Naive thymus-derived CD4-positive, alpha-beta T cell (primary cell): ENCODE measurements at regions of chr5 and their contacts with region 1.

Region 1: DNA sequence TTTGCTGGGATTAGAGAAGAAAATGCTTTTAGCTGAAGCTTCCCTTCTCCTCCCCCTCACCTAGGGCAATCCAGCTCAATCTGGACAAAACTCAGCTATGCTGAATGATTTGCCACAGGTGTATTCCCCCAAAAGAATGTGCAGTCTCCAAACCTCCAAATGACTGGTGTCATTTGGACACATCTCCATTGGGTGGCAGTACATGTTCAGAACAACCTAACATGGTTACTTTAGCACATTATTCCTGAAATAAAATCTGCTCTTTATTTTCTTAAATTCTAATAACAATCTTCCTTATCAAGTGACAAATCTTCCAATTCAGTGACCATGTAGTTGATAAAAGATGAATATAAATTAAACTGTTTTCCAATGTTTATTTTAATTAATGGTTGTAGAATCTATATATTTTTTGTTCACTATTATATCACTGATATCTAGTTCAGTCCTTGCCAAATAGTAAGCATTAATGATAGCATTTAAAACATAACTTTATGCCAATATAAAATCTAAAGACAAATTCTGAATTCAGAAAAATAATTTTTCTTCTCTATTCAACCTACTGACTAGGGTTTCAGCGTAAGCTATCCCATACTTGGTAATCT is 61.3 kb upstream of the MOCS2 start:
- DNase-seq: peak in 2 of 9 donors; percentile 3 to 22
- ATAC-seq: no peak
- H3K4me3 ChIP-seq: no peak overlapping the region
- H3K4me3 Mint-ChIP-seq: no peak overlapping the region
- H3K27ac ChIP-seq: no peak overlapping the region
- H3K27ac Mint-ChIP-seq: no peak overlapping the region
- H3K4me1 ChIP-seq: no peaks in the 10 kb centered on the region
- H3K4me1 Mint-ChIP-seq: no peaks in the 10 kb centered on the region
- H3K27me3 ChIP-seq: no peaks in the 10 kb centered on the region
- H3K27me3 Mint-ChIP-seq: peaks cover 0 to 33% (median 24%) of the 10 kb centered on the region in 5 donors

Region 2: DNA sequence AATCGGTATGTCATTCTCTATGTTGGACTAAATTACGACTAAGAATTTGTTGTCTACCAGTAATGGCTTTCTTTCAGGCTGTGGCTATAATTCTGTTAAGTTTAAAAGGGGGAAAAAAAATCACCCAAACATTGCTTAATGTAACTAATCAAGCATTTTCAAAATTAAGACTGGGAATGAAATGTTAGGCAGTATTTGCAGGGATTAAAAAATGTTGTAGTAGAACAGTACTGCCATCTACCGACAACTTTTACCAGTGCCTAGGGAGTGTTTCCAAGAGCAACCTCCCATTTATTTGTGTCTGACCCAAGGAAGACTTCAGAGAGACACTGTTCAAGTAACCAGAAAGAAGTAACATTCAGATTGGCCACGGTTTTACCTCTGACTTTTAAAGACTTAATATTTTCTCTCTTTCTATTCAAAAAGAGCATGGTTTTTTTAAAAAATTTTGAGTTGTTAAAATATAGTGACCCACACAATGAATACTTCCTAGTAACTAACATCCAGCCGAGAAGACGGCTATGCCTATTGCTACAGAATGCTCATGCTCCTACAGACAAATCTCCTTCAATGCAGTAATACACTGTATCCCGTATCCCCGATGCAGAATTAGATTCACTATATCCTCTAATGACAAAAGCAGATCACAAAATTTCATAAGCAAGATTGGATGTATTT is 1047.1 kb after region 1 on chr5:
- CTCF ChIA-PET with region 1: no interaction called
- POLR2A ChIA-PET with region 1: no interaction called
- intact Hi-C with region 1: loop called (anchors 1 kb)
- DNase-seq: peak in 3 of 9 donors; percentile 8 to 37 (median 28)
- ATAC-seq: peak; percentile 51
- H3K4me3 ChIP-seq: no peak overlapping the region
- H3K4me3 Mint-ChIP-seq: no peak overlapping the region
- H3K27ac ChIP-seq: no peak overlapping the region
- H3K27ac Mint-ChIP-seq: no peak overlapping the region
- H3K4me1 ChIP-seq: no peaks in the 10 kb centered on the region
- H3K4me1 Mint-ChIP-seq: peaks cover 0 to 23% (median 10%) of the 10 kb centered on the region in 7 donors
- H3K27me3 ChIP-seq: no peaks in the 10 kb centered on the region
- H3K27me3 Mint-ChIP-seq: peaks cover 0 to 2% (median 0%) of the 10 kb centered on the region in 5 donors

Region 3: GRCh38 chr5:54229041-54229780 is 1058.4 kb after region 1 on chr5:
- CTCF ChIA-PET with region 1: interaction called, 6 read pairs
- POLR2A ChIA-PET with region 1: no interaction called
- intact Hi-C with region 1: loop called (anchors 1 to 5 kb)
- DNase-seq: peak; percentile 32 to 70 (median 62)
- ATAC-seq: peak; percentile 89
- H3K4me3 ChIP-seq: no peak overlapping the region
- H3K4me3 Mint-ChIP-seq: peak overlapping the region in 1 of 10 donors; percentile 14
- H3K27ac ChIP-seq: no peak overlapping the region
- H3K27ac Mint-ChIP-seq: peak overlapping the region in 1 of 9 donors; percentile 10
- H3K4me1 ChIP-seq: peaks cover 0 to 4% of the 10 kb centered on the region in 2 donors
- H3K4me1 Mint-ChIP-seq: peaks cover 3 to 39% (median 18%) of the 10 kb centered on the region in 7 donors
- H3K27me3 ChIP-seq: no peaks in the 10 kb centered on the region
- H3K27me3 Mint-ChIP-seq: peaks cover 0 to 8% (median 0%) of the 10 kb centered on the region in 5 donors

Region 4: DNA sequence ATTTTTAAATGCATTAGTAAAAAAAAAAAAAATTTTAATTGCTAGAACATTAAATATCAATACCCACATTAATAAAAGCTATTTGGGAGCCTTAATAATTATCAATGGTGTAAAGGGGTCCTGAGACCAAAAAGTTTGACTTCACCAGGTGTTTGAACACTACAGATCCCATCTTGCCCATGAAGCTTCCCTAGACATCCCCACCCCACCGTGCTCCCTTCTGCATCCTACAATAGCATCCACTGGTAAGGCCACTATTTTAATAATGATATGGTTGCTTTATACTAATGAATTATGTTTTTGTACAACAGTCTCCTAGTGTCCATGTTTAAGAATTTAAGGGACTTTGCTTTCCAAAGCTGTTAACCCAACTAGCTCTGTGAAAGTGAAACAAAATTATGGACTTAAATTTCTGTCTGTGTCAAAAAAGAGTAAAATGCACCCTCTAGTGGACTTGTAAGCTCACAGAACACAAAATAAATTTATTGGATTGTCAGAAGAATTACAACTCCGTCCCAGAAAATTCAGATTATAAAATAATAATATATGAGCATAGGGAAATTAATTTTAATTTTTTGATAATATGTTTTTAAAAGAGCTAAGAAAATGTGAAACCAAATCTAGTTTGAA is 1063.6 kb after region 1 on chr5:
- CTCF ChIA-PET with region 1: interaction called, 6 read pairs
- POLR2A ChIA-PET with region 1: no interaction called
- intact Hi-C with region 1: loop called (anchors 1 to 5 kb)
- DNase-seq: peak in 1 of 9 donors; percentile 23
- ATAC-seq: no peak
- H3K4me3 ChIP-seq: no peak overlapping the region
- H3K4me3 Mint-ChIP-seq: peak overlapping the region in 1 of 10 donors; percentile 17
- H3K27ac ChIP-seq: no peak overlapping the region
- H3K27ac Mint-ChIP-seq: no peak overlapping the region
- H3K4me1 ChIP-seq: peaks cover 0 to 2% of the 10 kb centered on the region in 2 donors
- H3K4me1 Mint-ChIP-seq: peaks cover 3 to 14% (median 8%) of the 10 kb centered on the region in 7 donors
- H3K27me3 ChIP-seq: no peaks in the 10 kb centered on the region
- H3K27me3 Mint-ChIP-seq: peaks cover 0 to 1% (median 0%) of the 10 kb centered on the region in 5 donors

Region 5: DNA sequence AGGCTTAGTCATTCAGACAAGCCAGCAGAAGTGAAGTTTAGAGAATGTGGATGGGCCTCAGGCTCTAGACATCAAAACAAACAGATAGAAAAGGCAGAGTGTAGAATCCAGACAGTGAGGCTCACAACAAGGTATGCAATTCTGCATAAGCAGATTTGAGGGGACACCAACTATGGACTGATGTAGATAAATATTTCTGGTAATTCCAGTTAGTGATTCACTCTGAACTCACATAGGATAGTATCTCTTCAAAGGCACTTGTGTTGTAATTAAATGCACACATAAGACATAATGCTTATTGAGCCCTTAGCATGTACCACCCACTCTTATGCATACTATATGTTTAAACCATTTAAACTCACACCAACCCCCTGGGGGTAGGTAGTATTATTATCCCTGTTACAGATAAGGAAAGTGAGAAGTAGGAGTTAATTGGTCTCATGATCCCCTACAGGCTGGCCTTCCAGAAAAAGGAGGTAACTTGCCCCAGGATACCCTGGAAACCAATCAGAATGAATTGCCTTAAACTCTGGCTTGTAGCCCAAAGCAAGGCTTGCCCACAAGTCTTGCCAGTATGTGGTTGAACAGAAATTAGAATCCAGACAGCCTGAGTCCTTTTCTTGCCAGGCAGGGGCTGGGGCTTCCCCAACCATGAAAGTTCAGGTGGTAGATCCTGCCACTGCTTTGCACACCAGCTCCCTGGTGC is 1245.2 kb after region 1 on chr5:
- CTCF ChIA-PET with region 1: no interaction called
- POLR2A ChIA-PET with region 1: no interaction called
- intact Hi-C with region 1: loop called in 1 of 2 experiments (anchors 2 kb)
- DNase-seq: no peak
- ATAC-seq: no peak
- H3K4me3 ChIP-seq: no peak overlapping the region
- H3K4me3 Mint-ChIP-seq: no peak overlapping the region
- H3K27ac ChIP-seq: no peak overlapping the region
- H3K27ac Mint-ChIP-seq: no peak overlapping the region
- H3K4me1 ChIP-seq: no peaks in the 10 kb centered on the region
- H3K4me1 Mint-ChIP-seq: peaks cover 0 to 1% (median 0%) of the 10 kb centered on the region in 7 donors
- H3K27me3 ChIP-seq: no peaks in the 10 kb centered on the region
- H3K27me3 Mint-ChIP-seq: peaks cover 4 to 32% (median 10%) of the 10 kb centered on the region in 5 donors

Region 6: GRCh38 chr5:54492178-54492577 is 1321.3 kb after region 1 on chr5:
- CTCF ChIA-PET with region 1: no interaction called
- POLR2A ChIA-PET with region 1: no interaction called
- intact Hi-C with region 1: loop called in 1 of 2 experiments (anchors 2 kb)
- DNase-seq: no peak
- ATAC-seq: no peak
- H3K4me3 ChIP-seq: no peak overlapping the region
- H3K4me3 Mint-ChIP-seq: no peak overlapping the region
- H3K27ac ChIP-seq: no peak overlapping the region
- H3K27ac Mint-ChIP-seq: no peak overlapping the region
- H3K4me1 ChIP-seq: no peaks in the 10 kb centered on the region
- H3K4me1 Mint-ChIP-seq: no peaks in the 10 kb centered on the region
- H3K27me3 ChIP-seq: no peaks in the 10 kb centered on the region
- H3K27me3 Mint-ChIP-seq: peaks cover 0 to 19% (median 4%) of the 10 kb centered on the region in 5 donors